Breast epithelium (tissue), 4 donors: ENCODE measurements at regions of chr3 and their contacts with region 1.

Region 1: DNA sequence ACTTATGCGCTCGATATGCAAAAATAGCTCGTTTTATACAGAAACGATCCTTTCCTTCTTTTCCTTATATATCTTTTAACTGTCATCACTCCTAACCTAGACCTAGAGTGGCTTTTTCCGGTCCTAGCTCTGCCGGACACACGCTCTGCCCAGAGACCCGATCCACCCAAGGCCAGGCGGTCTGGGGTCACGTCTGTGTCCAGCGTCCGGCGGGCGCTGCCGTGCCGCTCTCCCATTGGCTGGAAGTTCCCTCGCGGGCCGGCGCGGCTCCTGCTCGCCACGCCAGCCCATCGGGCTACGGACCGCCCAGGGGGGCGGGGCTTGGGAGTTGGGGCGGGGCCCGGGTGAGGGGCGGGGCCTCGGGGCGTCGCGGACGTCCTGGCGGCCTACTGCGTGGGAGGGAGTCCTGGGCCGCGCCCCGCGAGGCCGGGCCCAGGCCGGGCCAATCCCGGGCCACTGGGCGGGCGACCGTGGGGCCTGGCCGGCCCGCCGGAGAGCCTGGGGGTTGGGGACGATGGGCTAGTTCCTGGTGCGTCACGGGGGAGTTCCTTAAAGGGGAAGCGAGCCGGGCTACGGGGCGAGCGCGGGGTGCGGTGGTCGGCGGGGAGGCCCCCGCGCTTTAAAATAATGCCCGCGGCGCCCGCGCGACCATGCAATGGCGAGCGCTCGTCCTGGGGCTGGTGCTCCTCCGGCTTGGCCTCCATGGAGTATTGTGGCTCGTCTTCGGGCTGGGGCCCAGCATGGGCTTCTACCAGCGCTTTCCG is at the start of gene EDEM1:
- DNase-seq: peak; percentile 93 to 95
- H3K4me3 ChIP-seq: peak within 1 kb of the TSS; percentile 93 to 99 (median 96)
- H3K27ac ChIP-seq: peak within 1 kb of the TSS; percentile 97
- H3K4me1 ChIP-seq: peaks cover 0 to 4% of the 10 kb centered on the region in 2 donors
- H3K27me3 ChIP-seq: no peaks in the 10 kb centered on the region
- CTCF ChIP-seq: no peak
- POLR2A ChIP-seq: peak; percentile 75
- total RNA-seq, gene EDEM1: 34.9 to 45.8 (median 42.6) TPM

Region 2: GRCh38 chr3:4504340-4505261 is 682.7 kb before region 1 on chr3:
- intact Hi-C with region 1: loop called (anchors 5 kb)
- DNase-seq: peak in 1 of 2 donors; percentile 54
- H3K4me3 ChIP-seq: peak overlapping the region in 2 of 3 donors; percentile 32 to 50
- H3K27ac ChIP-seq: peak overlapping the region; percentile 77 to 88
- H3K4me1 ChIP-seq: peaks cover 4 to 7% of the 10 kb centered on the region in 2 donors
- H3K27me3 ChIP-seq: no peaks in the 10 kb centered on the region
- CTCF ChIP-seq: no peak
- POLR2A ChIP-seq: no peak

Region 3: DNA sequence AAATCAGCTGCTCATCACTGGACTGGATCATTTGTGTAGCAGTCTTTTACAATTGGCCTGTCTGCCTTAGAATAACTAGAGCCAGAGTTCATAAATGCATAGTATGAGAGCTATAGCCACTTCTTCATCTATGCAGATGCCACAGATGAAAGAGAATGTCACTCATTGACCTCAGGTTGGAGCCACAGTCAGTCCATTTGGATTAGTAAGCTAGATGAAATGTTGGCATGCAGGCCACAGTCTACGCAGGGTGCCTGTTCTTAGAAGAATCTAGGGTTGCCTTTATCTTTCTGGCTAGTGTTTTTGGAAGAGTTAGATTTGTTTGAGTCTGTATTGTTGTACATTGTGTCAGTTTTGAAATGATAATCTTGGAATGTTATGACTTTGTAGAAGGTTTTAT is 25.2 kb before region 1 on chr3:
- intact Hi-C with region 1: no loop called
- DNase-seq: no peak
- H3K4me3 ChIP-seq: no peak overlapping the region
- H3K27ac ChIP-seq: no peak overlapping the region
- H3K4me1 ChIP-seq: no peaks in the 10 kb centered on the region
- H3K27me3 ChIP-seq: no peaks in the 10 kb centered on the region
- CTCF ChIP-seq: no peak
- POLR2A ChIP-seq: no peak

Region 4: DNA sequence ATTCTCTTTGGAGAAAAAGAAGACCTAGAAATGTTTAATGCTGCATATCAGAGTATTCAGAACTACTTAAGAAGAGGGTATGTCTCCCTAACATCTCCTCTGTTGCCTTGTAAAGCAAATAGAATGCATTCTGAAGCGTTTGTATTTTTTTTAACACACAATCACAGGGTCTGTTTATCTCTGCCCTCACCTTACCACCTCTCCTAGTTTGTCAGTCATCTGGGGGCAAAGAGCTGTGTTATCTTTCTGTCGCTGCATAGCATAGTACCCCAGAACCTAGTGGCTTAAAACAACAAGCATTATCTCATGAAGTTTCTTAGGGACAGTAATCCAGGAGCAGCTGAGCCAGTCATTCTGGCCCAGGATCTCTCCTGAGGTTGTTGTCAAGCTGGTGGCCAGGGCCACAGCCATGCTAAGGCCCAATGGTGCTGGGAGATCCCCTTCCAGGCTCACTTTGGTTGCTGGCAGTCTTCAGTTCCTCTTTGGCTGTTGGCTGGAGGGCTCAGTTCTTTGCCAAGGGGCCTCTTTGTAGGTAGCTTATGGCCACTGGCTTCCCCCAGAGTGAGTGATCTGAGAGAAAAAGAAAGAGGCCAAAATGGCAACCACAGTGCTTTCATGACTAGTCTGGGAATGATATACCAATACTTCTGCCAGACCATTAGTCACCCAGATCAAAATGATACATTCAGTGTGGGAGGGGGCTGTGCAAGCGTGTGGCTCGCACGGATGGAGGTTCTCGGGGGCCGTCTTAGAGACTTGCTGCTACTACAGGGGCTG is 18.0 kb after region 1 on chr3:
- intact Hi-C with region 1: loop called (anchors 1 kb)
- DNase-seq: no peak
- H3K4me3 ChIP-seq: no peak overlapping the region
- H3K27ac ChIP-seq: no peak overlapping the region
- H3K4me1 ChIP-seq: no peaks in the 10 kb centered on the region
- H3K27me3 ChIP-seq: no peaks in the 10 kb centered on the region
- CTCF ChIP-seq: no peak
- POLR2A ChIP-seq: no peak

Region 5: DNA sequence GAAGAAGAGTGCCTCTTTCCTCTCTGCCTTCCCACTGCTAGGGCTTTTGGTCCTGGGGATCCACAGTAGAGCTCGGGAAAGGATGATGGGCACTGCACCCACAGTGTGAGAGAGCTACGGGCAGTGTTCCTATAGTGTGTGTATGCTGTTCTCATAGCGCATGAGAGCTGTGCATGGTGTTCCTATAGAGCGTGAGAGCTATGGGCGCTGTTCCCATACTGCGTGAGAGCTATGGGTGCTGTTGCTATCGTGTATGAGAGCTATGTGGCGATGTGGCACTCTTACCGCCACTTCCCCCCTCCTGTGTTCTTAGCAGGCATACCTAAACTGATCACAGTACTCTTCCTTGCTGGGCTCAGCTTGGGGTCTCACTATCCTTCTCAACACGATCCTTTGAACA is 213.7 kb after region 1 on chr3:
- intact Hi-C with region 1: no loop called
- DNase-seq: no peak
- H3K4me3 ChIP-seq: no peak overlapping the region
- H3K27ac ChIP-seq: no peak overlapping the region
- H3K4me1 ChIP-seq: no peaks in the 10 kb centered on the region
- H3K27me3 ChIP-seq: no peaks in the 10 kb centered on the region
- CTCF ChIP-seq: no peak
- POLR2A ChIP-seq: no peak